ENCODE measurements at regions of chr11 and their contacts with region 1.

Region 1: GRCh38 chr11:120391292-120391691 is 55.1 kb downstream of the ARHGEF12 start:
- DNase-seq: no peak
- H3K4me3 ChIP-seq: no peak overlapping the region
- H3K27ac ChIP-seq: peak overlapping the region in 1 of 5 donors; percentile 27
- H3K4me1 ChIP-seq: peaks cover 10 to 35% of the 10 kb centered on the region in 2 donors
- H3K27me3 ChIP-seq: no peaks in the 10 kb centered on the region
- CTCF ChIP-seq: no peak
- POLR2A ChIP-seq: no peak

Region 2: GRCh38 chr11:120344302-120345004 is 46.8 kb before region 1 on chr11:
- intact Hi-C with region 1: loop called in 1 of 2 experiments (anchors 10 kb)
- DNase-seq: no peak
- H3K4me3 ChIP-seq: no peak overlapping the region
- H3K27ac ChIP-seq: no peak overlapping the region
- H3K4me1 ChIP-seq: peaks cover 19 to 86% of the 10 kb centered on the region in 2 donors
- H3K27me3 ChIP-seq: no peaks in the 10 kb centered on the region
- CTCF ChIP-seq: no peak
- POLR2A ChIP-seq: no peak

Region 3: DNA sequence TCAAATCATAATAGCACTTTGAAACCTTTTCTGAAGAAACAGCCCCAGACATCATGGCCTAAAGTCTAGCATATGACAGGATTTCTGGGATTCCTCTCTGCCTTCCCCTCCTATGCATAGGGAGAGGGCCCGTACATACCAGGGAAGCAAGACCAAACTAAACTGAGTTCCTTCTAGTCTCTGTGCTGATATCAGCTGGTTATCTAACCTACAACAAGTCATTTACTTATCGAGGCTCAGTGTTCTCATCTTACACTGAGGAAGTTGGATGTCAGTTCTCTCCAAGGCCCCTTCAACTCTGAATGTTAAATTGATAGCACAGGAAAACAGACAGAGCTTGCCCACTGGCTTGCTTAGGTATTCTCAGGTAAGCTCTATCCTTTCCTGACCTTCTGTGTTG is 103.3 kb after region 1 on chr11:
- intact Hi-C with region 1: no loop called
- DNase-seq: no peak
- H3K4me3 ChIP-seq: no peak overlapping the region
- H3K27ac ChIP-seq: no peak overlapping the region
- H3K4me1 ChIP-seq: no peaks in the 10 kb centered on the region
- H3K27me3 ChIP-seq: no peaks in the 10 kb centered on the region
- CTCF ChIP-seq: no peak
- POLR2A ChIP-seq: no peak